Right ventricle myocardium inferior (tissue), 1 donor: ENCODE measurements at regions of chr5 and their contacts with region 1.

Region 1: DNA sequence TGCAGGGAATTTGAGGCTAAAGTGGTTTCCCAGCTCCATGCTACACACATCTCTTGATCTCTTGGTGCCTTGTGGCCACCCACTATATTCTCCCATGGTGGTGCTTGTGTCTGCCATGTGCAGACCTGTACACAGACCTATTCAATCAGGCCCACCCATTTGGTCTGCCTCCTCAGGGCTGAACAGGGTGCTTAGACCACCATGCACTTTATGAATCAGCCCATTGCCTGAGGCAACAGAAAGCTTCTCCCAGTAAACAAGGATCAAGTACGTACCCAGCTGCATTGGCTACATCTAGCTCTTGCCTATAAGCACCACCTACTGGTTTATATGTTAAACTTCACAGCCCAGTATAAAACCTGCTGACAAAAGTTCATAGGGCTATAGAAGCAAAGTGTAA is 664.3 kb upstream of the EDIL3 start:
- DNase-seq: no peak
- ATAC-seq: peak; percentile 39

Region 2: GRCh38 chr5:84274585-84275468 is 774.2 kb before region 1 on chr5:
- intact Hi-C with region 1: loop called (anchors 10 kb)
- DNase-seq: peak; percentile 41
- ATAC-seq: no peak

Region 3: DNA sequence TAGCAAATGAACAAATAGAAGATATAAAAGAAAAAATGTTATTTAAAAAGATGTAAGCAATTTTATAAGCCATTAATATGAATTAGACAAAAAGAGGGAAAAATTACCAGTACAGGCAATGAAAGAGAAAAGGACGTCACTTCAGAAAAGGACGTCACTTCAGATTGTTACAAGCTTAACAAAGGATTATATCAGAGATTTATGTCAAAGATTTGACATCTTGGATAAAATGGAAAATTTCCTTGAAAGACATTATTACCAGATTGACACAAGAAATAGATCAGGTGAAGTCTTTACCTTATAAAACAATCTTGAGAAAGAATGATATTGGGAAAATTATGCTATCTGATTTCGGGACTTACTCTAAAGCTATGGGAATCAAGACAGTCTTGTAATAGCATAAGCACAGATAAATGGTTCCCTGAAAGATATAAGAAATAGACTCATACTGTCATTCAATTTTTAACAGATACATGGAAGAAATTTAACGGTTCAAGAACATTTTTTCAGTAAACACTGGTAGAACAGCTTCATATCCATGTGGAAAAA is 38.9 kb before region 1 on chr5:
- intact Hi-C with region 1: no loop called
- DNase-seq: no peak
- ATAC-seq: no peak